ENCODE measurements at regions of chr2 and their contacts with region 1.

Region 1: GRCh38 chr2:24971536-24972314 is at the start of gene DNAJC27:
- DNase-seq: peak; percentile 98
- ATAC-seq: peak; percentile 94
- H3K4me3 Mint-ChIP-seq: peak within 1 kb of the TSS; percentile 98
- H3K27ac Mint-ChIP-seq: peak within 1 kb of the TSS; percentile 100
- H3K4me1 Mint-ChIP-seq: peaks cover 14% of the 10 kb centered on the region
- H3K27me3 Mint-ChIP-seq: no peaks in the 10 kb centered on the region
- CTCF ChIP-seq: no peak
- total RNA-seq, gene DNAJC27: 5.2 to 6.6 TPM

Region 2: DNA sequence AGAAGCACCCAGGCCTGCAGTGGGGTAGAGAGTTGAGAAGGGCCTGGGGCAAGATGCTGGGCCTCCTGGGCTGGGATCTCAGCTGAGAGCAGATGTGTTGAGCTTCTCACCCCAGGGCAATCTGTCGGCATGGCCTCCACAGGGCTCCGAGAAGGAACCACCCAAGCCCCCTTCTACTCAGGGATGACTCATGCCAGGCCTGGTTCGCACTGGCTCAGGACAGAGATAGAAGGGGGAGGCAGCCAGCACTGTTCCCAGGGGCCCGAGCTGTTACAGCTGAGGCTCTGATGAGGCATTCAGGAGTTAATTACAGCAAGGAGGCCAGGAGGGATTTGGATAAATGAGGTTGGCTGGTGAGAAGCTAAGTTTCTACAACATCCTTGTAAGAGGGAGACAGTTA is 116.0 kb before region 1 on chr2:
- CTCF ChIA-PET with region 1: no interaction called
- POLR2A ChIA-PET with region 1: no interaction called
- intact Hi-C with region 1: no loop called
- DNase-seq: no peak
- ATAC-seq: no peak
- H3K4me3 Mint-ChIP-seq: no peak overlapping the region
- H3K27ac Mint-ChIP-seq: no peak overlapping the region
- H3K4me1 Mint-ChIP-seq: no peaks in the 10 kb centered on the region
- H3K27me3 Mint-ChIP-seq: no peaks in the 10 kb centered on the region
- CTCF ChIP-seq: no peak

Region 3: GRCh38 chr2:24984912-24985311 is 13.2 kb after region 1 on chr2:
- CTCF ChIA-PET with region 1: interaction called, 16 read pairs
- POLR2A ChIA-PET with region 1: no interaction called
- intact Hi-C with region 1: no loop called
- DNase-seq: no peak
- ATAC-seq: no peak
- H3K4me3 Mint-ChIP-seq: no peak overlapping the region
- H3K27ac Mint-ChIP-seq: no peak overlapping the region
- H3K4me1 Mint-ChIP-seq: no peaks in the 10 kb centered on the region
- H3K27me3 Mint-ChIP-seq: peaks cover 5% of the 10 kb centered on the region
- CTCF ChIP-seq: no peak

Region 4: GRCh38 chr2:25018681-25019080 is 47.0 kb after region 1 on chr2:
- CTCF ChIA-PET with region 1: no interaction called
- POLR2A ChIA-PET with region 1: no interaction called
- intact Hi-C with region 1: no loop called
- DNase-seq: no peak
- ATAC-seq: no peak
- H3K4me3 Mint-ChIP-seq: no peak overlapping the region
- H3K27ac Mint-ChIP-seq: no peak overlapping the region
- H3K4me1 Mint-ChIP-seq: no peaks in the 10 kb centered on the region
- H3K27me3 Mint-ChIP-seq: no peaks in the 10 kb centered on the region
- CTCF ChIP-seq: no peak

Region 5: DNA sequence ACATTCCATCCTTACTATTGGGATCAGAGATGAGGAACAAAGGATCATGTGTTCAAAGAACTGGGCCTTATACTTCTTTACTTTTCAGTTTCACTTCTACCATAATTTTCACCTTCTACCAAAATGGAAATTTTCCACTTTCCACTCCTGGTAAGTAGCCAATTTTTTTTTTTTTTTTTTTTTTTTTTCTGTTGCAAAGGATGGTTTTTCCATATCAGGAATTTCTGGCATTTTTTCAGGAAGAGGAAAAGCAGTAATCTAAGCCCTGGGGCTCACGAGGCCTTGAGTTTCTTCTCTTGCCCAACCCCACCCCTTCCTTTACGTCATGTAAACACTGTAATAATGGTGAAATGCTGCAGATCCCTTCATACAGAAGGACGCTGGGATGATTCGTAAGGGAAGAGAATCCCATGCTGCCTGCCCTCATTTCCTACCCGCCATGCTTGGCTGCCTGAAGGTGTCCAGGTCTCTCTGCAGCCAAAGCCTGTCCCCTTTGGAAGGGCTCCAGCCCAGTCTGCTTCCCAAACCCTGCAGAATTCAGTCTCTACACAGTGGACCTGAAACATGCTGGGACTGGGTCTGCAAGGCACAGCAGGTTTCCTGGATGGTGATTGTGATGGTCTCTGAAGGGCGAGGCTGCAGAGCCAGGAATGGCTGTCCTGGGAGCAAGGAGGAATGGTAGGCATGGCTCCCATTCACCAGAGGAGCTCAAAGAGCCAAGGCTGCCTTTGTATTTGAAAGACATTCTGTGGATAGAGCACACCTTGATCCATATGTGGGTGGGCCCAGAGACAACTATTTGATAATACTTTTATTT is 127.2 kb after region 1 on chr2:
- CTCF ChIA-PET with region 1: interaction called, 10 read pairs
- POLR2A ChIA-PET with region 1: no interaction called
- intact Hi-C with region 1: no loop called
- DNase-seq: no peak
- ATAC-seq: no peak
- H3K4me3 Mint-ChIP-seq: no peak overlapping the region
- H3K27ac Mint-ChIP-seq: no peak overlapping the region
- H3K4me1 Mint-ChIP-seq: peaks cover 17% of the 10 kb centered on the region
- H3K27me3 Mint-ChIP-seq: no peaks in the 10 kb centered on the region
- CTCF ChIP-seq: no peak

Region 6: DNA sequence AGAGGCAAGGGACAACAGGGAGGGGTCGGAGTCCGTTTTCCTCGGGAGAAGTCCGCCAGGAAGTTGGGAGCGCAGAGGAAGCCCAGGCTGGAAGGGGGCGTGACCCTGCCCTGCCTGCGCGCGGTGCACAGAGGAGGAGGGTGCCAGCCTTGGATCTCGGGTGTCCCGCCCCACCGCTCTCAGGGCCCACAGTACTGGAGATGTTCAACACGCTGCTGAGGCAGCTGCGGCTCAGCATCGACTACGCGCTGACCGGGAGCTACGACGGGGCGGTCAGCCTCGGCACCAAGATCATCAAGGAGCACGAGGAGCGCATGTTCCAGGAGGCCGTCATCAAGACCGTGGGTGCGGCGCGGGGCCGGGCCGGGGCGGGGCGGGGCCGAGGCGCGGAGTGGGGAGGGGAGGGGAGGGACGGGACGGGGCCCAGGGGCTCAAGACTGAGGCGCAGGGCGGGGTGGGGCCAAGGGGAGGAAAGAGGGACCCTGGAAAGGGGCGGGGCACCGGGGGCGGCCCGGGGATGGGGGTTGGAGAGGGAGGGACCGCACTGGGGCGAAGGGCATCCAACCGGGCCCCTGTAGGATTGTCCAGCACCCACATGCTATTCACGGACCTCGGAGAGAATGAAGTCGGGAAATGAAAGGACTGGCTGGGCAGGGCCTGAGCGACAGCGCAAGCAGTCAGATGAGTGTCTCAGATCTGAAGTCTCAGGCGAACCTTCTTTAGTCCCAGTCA is 160.0 kb after region 1 on chr2:
- CTCF ChIA-PET with region 1: interaction called, 183 read pairs
- POLR2A ChIA-PET with region 1: interaction called, 11 read pairs
- intact Hi-C with region 1: loop called (anchors 2 kb)
- DNase-seq: peak; percentile 16
- ATAC-seq: peak; percentile 32
- H3K4me3 Mint-ChIP-seq: peak overlapping the region; percentile 45
- H3K27ac Mint-ChIP-seq: no peak overlapping the region
- H3K4me1 Mint-ChIP-seq: peaks cover 3% of the 10 kb centered on the region
- H3K27me3 Mint-ChIP-seq: peaks cover 41% of the 10 kb centered on the region
- CTCF ChIP-seq: no peak

Region 7: GRCh38 chr2:25197336-25198208 is 225.8 kb after region 1 on chr2:
- CTCF ChIA-PET with region 1: interaction called, 39 read pairs
- POLR2A ChIA-PET with region 1: no interaction called
- intact Hi-C with region 1: loop called (anchors 10 kb)
- DNase-seq: no peak
- ATAC-seq: no peak
- H3K4me3 Mint-ChIP-seq: no peak overlapping the region
- H3K27ac Mint-ChIP-seq: no peak overlapping the region
- H3K4me1 Mint-ChIP-seq: peaks cover 6% of the 10 kb centered on the region
- H3K27me3 Mint-ChIP-seq: no peaks in the 10 kb centered on the region
- CTCF ChIP-seq: no peak

Measured in activated CD8-positive, alpha-beta T cell treated with anti-CD3 and anti-CD28 coated beads for 36 hours (primary cell).